Activated CD8-positive, alpha-beta memory T cell treated with anti-CD3 and anti-CD28 coated beads, Interleukin-2, amount 10 ng/mL, durations not matched to agents 7 days and 5 days (primary cell): ENCODE measurements at regions of chr1 and their contacts with region 1.

Region 1: DNA sequence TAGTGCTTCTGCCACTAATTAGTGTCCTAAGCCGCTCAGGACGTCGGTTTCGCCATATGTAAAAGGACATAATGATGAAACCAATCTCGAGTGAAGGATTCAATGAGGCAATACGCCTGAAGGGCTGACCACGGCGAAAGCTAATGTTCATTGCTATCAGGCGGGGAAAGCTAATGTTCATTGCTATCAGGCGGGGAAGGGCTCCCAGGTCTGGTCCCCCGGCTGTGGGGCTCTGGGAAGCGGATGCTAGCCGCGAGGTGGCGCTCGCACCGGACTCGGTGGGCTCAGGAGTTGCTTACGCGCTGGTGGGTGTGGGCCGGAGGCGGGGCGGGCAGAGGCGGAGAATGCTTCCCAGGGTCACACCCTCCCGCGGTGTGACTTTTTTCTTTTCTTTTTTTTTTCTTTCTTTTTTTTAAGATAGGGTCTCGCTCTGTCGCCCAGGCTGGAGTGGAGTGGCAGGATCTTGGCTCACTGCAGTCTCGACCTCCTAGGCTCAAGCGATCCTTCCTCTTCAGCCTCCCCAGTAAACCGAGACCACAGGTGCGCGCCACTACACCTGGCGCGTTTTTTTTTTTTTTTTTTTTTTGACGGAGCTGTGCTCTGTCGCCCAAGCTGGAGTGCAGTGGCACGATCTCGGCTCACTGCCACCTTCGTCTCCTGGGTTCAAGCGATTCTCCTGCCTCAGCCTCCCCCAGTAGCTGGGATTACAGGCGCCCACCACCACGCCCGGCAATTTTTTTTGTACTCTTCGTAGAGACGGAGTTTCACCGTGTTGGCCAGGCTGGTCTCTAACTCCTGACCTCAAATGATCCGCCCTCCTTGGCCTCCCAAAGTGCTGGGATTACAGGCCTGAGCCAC is 1.1 kb upstream of the PEAR1 start:
- DNase-seq: peak; percentile 91
- ATAC-seq: peak; percentile 97
- H3K4me3 Mint-ChIP-seq: peak overlapping the region; percentile 39
- H3K27ac Mint-ChIP-seq: no peak overlapping the region
- H3K4me1 Mint-ChIP-seq: peaks cover 12% of the 10 kb centered on the region
- H3K27me3 Mint-ChIP-seq: peaks cover 68% of the 10 kb centered on the region

Region 2: GRCh38 chr1:156797212-156797871 is 95.1 kb before region 1 on chr1:
- CTCF ChIA-PET with region 1: interaction called, 86 read pairs
- DNase-seq: peak; percentile 76
- ATAC-seq: peak; percentile 77
- H3K4me3 Mint-ChIP-seq: no peak overlapping the region
- H3K27ac Mint-ChIP-seq: peak overlapping the region; percentile 10
- H3K4me1 Mint-ChIP-seq: peaks cover 30% of the 10 kb centered on the region
- H3K27me3 Mint-ChIP-seq: no peaks in the 10 kb centered on the region

Region 3: DNA sequence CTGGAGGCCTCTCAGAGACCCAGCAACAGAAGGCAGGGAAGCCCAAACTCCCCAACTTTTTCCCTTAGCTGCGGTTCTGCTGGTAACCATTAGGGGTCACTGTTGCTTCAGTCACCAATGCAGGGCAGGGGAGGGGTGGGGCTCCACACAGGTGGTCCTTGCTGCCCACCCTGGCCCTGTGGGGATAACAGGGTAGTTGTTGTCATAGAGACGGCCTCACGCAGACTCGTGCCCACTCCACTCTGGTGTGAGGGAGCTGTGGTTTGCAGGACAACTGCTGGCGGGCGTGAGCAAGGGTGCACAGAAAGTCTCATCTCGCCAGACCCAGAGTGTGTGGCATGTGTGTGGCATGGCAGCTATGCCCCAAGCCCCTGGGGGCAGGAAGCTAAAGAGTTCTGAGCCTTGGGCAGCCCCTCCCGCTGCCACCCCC is 53.4 kb before region 1 on chr1:
- CTCF ChIA-PET with region 1: interaction called, 74 read pairs
- DNase-seq: peak; percentile 66
- ATAC-seq: peak; percentile 60
- H3K4me3 Mint-ChIP-seq: no peak overlapping the region
- H3K27ac Mint-ChIP-seq: no peak overlapping the region
- H3K4me1 Mint-ChIP-seq: peaks cover 37% of the 10 kb centered on the region
- H3K27me3 Mint-ChIP-seq: peaks cover 28% of the 10 kb centered on the region

Region 4: GRCh38 chr1:156874572-156875340 is 17.7 kb before region 1 on chr1:
- CTCF ChIA-PET with region 1: interaction called, 31 read pairs
- DNase-seq: no peak
- ATAC-seq: no peak
- H3K4me3 Mint-ChIP-seq: no peak overlapping the region
- H3K27ac Mint-ChIP-seq: no peak overlapping the region
- H3K4me1 Mint-ChIP-seq: peaks cover 5% of the 10 kb centered on the region
- H3K27me3 Mint-ChIP-seq: peaks cover 25% of the 10 kb centered on the region

Region 5: DNA sequence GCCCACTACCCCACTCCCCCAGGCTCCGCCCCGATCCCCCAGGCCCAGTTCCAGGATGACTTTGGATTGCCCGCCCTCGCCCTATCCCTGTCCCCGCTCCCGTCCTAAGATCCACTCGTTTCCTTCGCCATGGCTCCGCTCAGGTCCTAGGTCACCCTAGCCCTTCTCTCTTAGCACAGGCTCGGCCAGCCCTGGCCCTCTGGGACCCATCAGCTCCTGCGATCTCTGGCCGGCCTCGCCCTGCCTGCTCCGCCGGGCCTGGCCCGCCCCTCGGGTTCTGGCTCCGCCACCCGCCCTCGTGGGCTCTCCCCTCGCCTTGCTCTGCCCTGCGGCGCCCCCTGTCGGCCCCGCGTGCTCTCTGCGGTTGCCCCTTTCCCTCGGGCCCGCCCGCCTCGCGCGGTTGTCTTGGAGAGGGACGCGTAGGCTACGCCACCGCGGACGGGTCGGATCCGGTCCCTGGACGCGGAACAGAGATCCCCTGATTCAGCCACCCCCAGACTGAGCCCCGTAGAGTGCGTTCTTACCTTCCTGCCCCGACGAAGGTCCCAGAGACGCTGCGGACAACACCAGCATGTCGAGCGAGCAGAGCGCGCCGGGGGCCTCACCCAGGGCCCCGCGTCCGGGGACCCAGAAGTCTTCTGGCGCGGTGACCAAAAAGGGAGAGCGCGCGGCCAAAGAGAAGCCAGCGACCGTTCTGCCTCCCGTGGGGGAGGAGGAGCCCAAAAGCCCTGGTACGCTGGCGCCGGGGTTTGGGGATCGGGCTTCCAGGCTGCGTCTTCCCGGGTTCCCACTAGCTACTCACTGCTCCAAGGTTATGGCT is 28.0 kb after region 1 on chr1 and contains the start of gene LRRC71:
- CTCF ChIA-PET with region 1: interaction called, 12 read pairs
- DNase-seq: peak; percentile 68
- ATAC-seq: peak; percentile 88
- H3K4me3 Mint-ChIP-seq: no peak within 1 kb of the TSS
- H3K27ac Mint-ChIP-seq: no peak within 1 kb of the TSS
- H3K4me1 Mint-ChIP-seq: peaks cover 7% of the 10 kb centered on the region
- H3K27me3 Mint-ChIP-seq: peaks cover 87% of the 10 kb centered on the region
- total RNA-seq, gene LRRC71: not detected

Region 6: DNA sequence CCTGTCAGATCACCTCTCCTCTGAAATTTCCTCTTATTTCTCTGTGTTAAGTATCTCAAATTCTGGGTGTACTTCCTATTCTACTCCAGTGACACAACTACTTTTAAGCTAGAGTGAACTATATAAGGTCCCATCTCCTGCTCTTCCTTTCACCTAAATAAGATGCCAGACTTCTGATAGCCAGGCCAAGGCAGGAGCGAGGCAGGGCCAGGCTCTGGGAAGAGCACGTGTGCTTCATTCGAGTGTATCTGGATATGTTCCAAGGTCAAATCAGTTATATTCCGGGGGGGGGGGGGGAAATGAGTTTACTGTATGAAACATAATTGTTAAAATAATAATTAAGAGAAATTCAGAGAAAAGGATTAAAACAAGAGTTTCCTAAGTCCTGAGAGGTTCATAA is 88.1 kb after region 1 on chr1:
- CTCF ChIA-PET with region 1: no interaction called
- DNase-seq: no peak
- ATAC-seq: no peak
- H3K4me3 Mint-ChIP-seq: no peak overlapping the region
- H3K27ac Mint-ChIP-seq: no peak overlapping the region
- H3K4me1 Mint-ChIP-seq: no peaks in the 10 kb centered on the region
- H3K27me3 Mint-ChIP-seq: peaks cover 50% of the 10 kb centered on the region

Region 7: DNA sequence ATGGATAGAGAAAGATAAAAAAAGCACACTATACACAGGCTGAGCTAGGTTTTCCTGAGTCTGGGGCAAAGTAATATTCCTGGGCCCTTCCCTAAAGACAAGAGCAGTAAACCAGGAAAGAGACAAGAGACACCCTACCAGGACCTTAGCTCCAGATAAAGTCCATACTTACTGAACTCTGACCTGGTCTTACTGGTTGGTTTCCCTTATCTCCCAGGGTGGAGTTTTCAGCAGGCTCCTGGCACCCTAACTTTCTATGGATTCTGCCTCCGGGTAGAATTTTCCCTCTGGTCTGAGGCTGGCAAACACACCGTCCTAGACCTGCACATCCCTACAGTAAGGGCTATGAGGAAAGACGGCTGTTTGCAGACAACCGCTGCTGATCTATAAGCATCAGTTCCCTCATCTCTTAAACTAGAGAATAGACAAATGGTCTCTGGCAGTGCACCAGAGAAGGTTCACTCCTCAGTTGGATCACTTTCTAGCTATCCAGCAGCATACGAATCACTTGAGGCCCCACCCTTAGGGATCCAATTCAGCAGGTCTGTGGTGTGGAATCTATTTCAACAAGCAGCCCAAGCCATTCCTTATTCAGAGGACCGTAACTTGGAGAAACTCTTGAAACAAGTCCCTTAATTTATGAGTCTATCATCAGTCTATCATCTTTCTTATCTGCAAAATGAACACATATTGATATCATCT is 101.2 kb after region 1 on chr1:
- CTCF ChIA-PET with region 1: no interaction called
- DNase-seq: no peak
- ATAC-seq: no peak
- H3K4me3 Mint-ChIP-seq: no peak overlapping the region
- H3K27ac Mint-ChIP-seq: no peak overlapping the region
- H3K4me1 Mint-ChIP-seq: no peaks in the 10 kb centered on the region
- H3K27me3 Mint-ChIP-seq: peaks cover 35% of the 10 kb centered on the region

Region 8: DNA sequence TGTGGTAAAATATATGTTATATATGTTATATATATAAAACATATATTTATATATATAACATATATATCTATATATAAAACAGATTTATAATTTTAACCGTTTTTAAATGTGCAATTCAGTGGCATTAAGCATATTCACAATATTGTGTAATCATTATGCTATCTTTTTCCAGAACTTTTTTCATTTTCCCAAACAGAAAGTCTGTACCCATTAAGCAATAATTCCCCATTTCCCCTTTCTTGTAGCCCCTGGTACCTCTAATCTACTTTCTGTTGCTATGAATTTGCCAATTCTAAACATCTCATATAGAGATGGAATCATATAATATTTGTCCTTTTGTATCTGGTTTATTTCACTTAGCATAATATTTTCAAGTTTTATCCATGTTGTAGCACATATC is 163.8 kb after region 1 on chr1:
- CTCF ChIA-PET with region 1: no interaction called
- DNase-seq: no peak
- ATAC-seq: no peak
- H3K4me3 Mint-ChIP-seq: no peak overlapping the region
- H3K27ac Mint-ChIP-seq: no peak overlapping the region
- H3K4me1 Mint-ChIP-seq: no peaks in the 10 kb centered on the region
- H3K27me3 Mint-ChIP-seq: peaks cover 60% of the 10 kb centered on the region